ENCODE measurements at regions of chr1 and their contacts with region 1.

Region 1: DNA sequence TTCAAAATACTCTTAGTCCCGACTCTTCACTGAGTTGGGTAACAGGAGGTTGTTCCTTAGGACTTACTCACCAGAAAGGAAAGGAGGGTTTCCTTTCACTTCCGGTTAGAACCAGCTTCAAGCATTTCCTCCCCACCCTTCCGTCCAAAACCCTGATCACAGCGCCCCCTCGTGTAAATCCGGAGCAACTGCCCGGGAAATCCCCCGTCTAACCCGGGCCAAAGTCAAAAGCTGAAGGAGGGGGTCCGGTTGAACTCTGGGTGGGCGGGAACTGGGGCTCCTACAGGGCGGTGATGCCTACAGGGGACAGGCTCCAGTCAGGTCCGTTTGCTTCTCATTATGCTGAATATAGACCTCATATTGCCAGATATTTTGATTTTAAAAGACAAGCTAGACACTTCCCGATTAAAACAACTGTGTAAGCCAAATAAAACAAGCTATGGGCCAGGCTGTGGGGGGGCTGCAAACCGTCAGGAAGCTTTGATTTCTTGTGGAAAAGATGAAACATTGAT is 15.0 kb upstream of the MTARC2 start:
- DNase-seq: peak; percentile 73
- ATAC-seq: peak; percentile 92

Region 2: DNA sequence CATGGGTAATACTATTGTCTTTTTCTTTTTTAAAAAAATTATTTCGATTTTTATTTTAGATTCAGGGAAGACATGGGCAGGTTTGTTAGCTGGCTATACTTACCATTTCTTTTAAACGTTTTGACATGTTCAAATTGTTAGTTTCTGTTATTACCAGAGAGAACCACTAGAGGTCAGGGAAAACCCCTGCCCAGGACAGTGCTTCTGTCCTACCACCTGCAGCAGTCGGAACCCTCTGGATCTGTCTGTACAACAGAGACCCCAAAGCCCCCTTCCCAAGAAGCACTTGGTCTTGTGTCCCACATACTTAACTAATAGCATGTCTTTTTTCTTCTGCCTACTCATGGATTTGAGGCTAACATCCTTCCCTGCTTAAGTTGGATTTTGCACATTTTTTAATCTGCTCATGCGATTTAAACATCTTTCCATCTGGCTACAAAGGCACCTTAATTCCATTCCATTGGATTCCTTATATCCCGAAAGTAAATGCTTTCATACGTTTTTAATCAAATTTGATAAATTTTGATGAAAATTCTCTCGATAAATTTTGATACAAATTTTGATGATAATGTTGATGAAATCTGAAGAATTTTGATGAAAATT is 53.0 kb before region 1 on chr1:
- intact Hi-C with region 1: loop called (anchors 2 kb)
- DNase-seq: no peak
- ATAC-seq: peak; percentile 60

Region 3: GRCh38 chr1:220690140-220691025 is 42.8 kb before region 1 on chr1 and contains the start of gene C1orf115:
- intact Hi-C with region 1: loop called (anchors 1 kb)
- DNase-seq: peak; percentile 85
- ATAC-seq: peak; percentile 97
- total RNA-seq, gene C1orf115: 22.4 TPM